ENCODE measurements at regions of chr14 and their contacts with region 1.

Region 1: GRCh38 chr14:51554953-51555352 is 96.8 kb upstream of the FRMD6 start:
- DNase-seq: no peak
- H3K4me3 ChIP-seq: no peak overlapping the region; the same call in 1 of the 2 replicates
- H3K27ac ChIP-seq: peak overlapping the region; percentile 70
- H3K4me1 ChIP-seq: peaks cover 30% of the 10 kb centered on the region
- H3K27me3 ChIP-seq: no peaks in the 10 kb centered on the region
- CTCF ChIP-seq: no peak; the same call in 1 of the 2 replicates

Region 2: GRCh38 chr14:51534625-51535024 is 20.3 kb before region 1 on chr14:
- CTCF ChIA-PET with region 1: no interaction called
- POLR2A ChIA-PET with region 1: interaction called, 4 read pairs
- intact Hi-C with region 1: loop called (anchors 2 kb)
- DNase-seq: peak; percentile 87 to 98
- H3K4me3 ChIP-seq: no peak overlapping the region
- H3K27ac ChIP-seq: peak overlapping the region; percentile 99
- H3K4me1 ChIP-seq: peaks cover 54% of the 10 kb centered on the region
- H3K27me3 ChIP-seq: no peaks in the 10 kb centered on the region
- CTCF ChIP-seq: no peak

Region 3: GRCh38 chr14:51922624-51923023 is 367.7 kb after region 1 on chr14:
- CTCF ChIA-PET with region 1: no interaction called
- POLR2A ChIA-PET with region 1: no interaction called
- intact Hi-C with region 1: no loop called
- DNase-seq: no peak
- H3K4me3 ChIP-seq: no peak overlapping the region
- H3K27ac ChIP-seq: no peak overlapping the region
- H3K4me1 ChIP-seq: no peaks in the 10 kb centered on the region
- H3K27me3 ChIP-seq: no peaks in the 10 kb centered on the region
- CTCF ChIP-seq: no peak